H1 (cell line): ENCODE measurements at regions of chr4 and their contacts with region 1.

Region 1: DNA sequence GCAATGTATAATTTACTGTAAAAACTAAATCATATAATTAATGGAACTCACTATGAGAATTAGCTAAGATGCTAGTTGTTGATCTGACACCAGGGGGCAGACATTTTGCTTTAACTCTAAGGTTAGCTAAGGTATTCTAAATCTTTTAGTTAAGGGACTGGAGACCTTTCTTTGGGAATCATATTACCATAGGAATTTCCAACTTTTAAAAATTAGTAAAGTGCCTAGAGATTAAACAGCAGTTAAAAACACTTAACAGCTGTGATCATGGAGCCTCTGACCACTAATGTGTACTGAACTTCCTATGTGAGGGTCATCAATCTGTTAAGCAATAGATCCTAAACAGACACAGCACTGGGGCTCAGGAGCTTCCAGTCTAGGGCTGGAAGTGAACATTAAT is 226.6 kb downstream of the NSUN7 start:
- DNase-seq: no peak
- H3K4me3 ChIP-seq: no peak overlapping the region
- H3K27ac ChIP-seq: no peak overlapping the region
- H3K4me1 ChIP-seq: no peaks in the 10 kb centered on the region
- H3K27me3 ChIP-seq: no peaks in the 10 kb centered on the region
- CTCF ChIP-seq: peak in 2 of 3 experiments; percentile 16 to 59; a peak in 2 of 4 replicates
- EP300 ChIP-seq: no peak
- POLR2A ChIP-seq: no peak
- RAD21 ChIP-seq: peak; percentile 43 to 59

Region 2: GRCh38 chr4:40840985-40841571 is 135.3 kb before region 1 on chr4:
- CTCF ChIA-PET with region 1: no interaction called
- POLR2A ChIA-PET with region 1: no interaction called
- DNase-seq: peak; percentile 89 to 97
- H3K4me3 ChIP-seq: no peak overlapping the region
- H3K27ac ChIP-seq: no peak overlapping the region
- H3K4me1 ChIP-seq: peaks cover 0 to 6% (median 0%) of the 10 kb centered on the region in 4 experiments; a peak in 1 of 7 replicates
- H3K27me3 ChIP-seq: no peaks in the 10 kb centered on the region
- CTCF ChIP-seq: peak; percentile 88 to 99 (median 98)
- EP300 ChIP-seq: peak in 1 of 2 experiments; percentile 28; a peak in 1 of 3 replicates
- POLR2A ChIP-seq: no peak
- RAD21 ChIP-seq: peak; percentile 70 to 77

Region 3: DNA sequence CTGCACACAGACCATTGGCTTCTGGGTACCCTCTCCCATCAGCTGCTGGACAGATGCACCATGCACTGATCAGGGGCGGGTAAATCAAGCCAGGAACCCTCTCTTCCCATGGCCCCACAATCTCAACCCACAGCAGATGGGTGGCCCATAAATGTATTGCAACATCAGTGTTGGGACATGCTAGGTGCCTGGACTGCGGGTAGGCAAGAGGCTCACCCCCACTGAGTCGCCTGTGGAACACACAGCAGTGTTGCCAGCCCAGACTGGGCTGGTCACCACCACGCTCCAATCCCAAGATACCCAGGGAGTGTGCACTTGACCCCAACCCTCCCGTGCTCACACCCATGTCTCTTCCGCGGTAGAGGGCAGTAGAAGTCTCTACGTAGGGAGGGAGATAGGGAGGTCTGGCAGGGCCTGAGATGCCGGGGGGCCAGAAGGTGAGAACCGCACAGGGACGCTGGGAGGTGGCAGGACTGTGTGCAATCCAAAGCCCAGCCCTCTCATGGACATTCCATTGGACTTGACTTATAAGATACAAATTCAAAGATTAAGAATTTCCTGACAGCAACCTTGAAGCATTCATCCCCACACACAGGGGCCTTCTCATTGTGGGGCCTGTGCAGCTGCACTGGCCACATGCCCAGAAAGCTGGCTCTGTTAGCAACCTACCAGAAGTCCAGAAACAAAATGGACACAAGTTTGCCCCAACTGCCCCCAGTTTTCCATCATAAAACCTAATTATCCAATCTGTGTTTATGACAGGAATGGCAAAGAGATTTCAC is 42.9 kb before region 1 on chr4:
- CTCF ChIA-PET with region 1: interaction called, 53 read pairs
- POLR2A ChIA-PET with region 1: no interaction called
- DNase-seq: no peak
- H3K4me3 ChIP-seq: no peak overlapping the region
- H3K27ac ChIP-seq: no peak overlapping the region
- H3K4me1 ChIP-seq: peaks cover 5 to 16% (median 13%) of the 10 kb centered on the region in 4 experiments; a peak in 5 of 7 replicates
- H3K27me3 ChIP-seq: no peaks in the 10 kb centered on the region
- CTCF ChIP-seq: no peak
- EP300 ChIP-seq: no peak
- POLR2A ChIP-seq: no peak
- RAD21 ChIP-seq: no peak

Region 4: GRCh38 chr4:40992472-40993295 is 16.3 kb after region 1 on chr4:
- CTCF ChIA-PET with region 1: interaction called, 58 read pairs
- POLR2A ChIA-PET with region 1: interaction called, 3 read pairs
- DNase-seq: no peak
- H3K4me3 ChIP-seq: no peak overlapping the region
- H3K27ac ChIP-seq: no peak overlapping the region
- H3K4me1 ChIP-seq: no peaks in the 10 kb centered on the region; a peak in 1 of 7 replicates
- H3K27me3 ChIP-seq: no peaks in the 10 kb centered on the region
- CTCF ChIP-seq: no peak
- EP300 ChIP-seq: no peak
- POLR2A ChIP-seq: no peak
- RAD21 ChIP-seq: no peak

Region 5: DNA sequence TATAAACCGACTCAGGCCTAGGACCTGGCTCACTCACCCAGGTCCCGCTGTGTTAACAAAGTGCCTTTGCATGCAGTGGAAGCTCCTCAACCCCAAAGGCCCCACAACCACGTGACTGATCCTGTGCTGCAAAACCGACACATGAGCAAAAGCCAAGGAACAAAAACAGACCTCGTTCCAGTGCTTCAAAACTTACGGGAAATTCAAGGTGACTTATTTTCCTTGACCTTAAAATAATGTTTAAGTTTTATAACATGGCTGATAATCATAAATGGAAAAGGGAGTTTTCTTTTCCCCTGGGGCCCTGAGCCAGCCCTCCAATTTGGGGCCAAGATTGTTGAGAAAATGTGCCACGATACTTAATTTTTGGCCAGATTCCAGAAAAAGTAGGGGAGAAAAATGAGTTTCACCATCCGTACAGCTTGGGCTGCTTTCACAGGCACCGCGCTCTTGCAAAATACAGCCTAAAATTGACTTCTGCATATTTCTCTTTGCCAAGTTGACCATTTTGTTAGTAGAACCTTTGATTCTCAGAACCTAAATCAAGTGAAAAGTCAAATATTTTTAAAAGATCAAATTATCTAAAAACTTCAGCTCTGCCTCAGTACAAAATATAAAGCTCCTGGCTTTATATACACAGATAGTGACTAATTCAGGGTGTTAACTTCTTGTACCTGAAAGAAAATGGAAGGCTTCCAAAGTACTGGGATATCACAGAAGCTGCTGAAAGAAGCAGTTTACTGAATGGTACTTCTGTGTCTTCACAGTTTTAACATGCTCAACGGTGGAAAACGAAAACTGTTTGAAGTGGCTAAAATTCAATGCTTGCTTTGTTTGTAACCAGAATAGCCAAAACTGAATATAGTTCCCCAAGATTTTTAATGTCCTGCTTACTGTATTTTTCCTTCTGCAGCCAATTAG is 144.2 kb after region 1 on chr4:
- CTCF ChIA-PET with region 1: interaction called, 22 read pairs
- POLR2A ChIA-PET with region 1: no interaction called
- DNase-seq: no peak
- H3K4me3 ChIP-seq: no peak overlapping the region
- H3K27ac ChIP-seq: no peak overlapping the region
- H3K4me1 ChIP-seq: peaks cover 0 to 8% (median 3%) of the 10 kb centered on the region in 4 experiments; a peak in 3 of 7 replicates
- H3K27me3 ChIP-seq: no peaks in the 10 kb centered on the region
- CTCF ChIP-seq: no peak
- EP300 ChIP-seq: no peak
- POLR2A ChIP-seq: no peak
- RAD21 ChIP-seq: no peak

Region 6: GRCh38 chr4:41146716-41147506 is 170.6 kb after region 1 on chr4:
- CTCF ChIA-PET with region 1: no interaction called
- POLR2A ChIA-PET with region 1: no interaction called
- DNase-seq: no peak
- H3K4me3 ChIP-seq: no peak overlapping the region
- H3K27ac ChIP-seq: no peak overlapping the region
- H3K4me1 ChIP-seq: peaks cover 2 to 11% (median 7%) of the 10 kb centered on the region in 4 experiments; a peak in 4 of 7 replicates
- H3K27me3 ChIP-seq: no peaks in the 10 kb centered on the region
- CTCF ChIP-seq: no peak
- EP300 ChIP-seq: no peak
- POLR2A ChIP-seq: no peak
- RAD21 ChIP-seq: no peak

Region 7: DNA sequence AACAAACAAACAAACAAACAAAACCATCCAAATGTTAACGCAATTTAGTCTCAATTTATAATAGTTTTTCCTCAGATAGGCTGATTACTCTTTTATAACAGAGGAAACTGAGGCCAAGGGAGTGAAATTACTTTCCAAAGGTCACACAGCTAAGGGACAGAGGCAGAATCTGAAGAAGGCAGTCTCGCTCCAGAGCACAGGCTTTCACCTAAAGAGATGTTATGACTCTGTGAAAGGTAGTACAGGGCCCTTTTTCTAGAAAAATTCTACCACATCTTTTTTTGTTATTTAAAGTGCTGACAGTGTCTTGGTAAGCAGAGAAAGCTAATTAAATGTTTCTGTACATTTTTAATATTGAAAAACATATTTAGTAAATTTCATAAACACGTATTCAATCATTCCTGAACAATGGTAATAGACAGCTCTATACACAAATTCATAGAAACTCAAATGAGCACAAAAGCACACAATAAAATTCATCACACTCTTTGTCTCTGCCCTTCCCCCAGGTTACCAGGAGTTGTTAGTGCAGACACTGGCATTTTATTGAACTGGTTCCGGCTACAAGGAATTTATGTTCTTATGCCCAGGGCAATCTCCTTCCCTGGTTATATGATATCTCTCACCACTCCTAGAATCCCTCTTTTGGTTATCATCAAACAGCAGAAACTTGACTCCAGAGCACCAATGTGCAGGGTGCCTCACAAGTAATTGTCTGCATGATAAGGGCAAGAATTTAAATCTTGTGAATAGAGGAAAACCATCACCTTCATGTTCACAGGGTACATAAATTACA is 245.7 kb after region 1 on chr4:
- CTCF ChIA-PET with region 1: interaction called, 167 read pairs
- POLR2A ChIA-PET with region 1: interaction called, 5 read pairs
- DNase-seq: peak in 1 of 2 experiments; percentile 2
- H3K4me3 ChIP-seq: no peak overlapping the region
- H3K27ac ChIP-seq: no peak overlapping the region
- H3K4me1 ChIP-seq: peaks cover 0 to 3% (median 1%) of the 10 kb centered on the region in 4 experiments; a peak in 4 of 7 replicates
- H3K27me3 ChIP-seq: no peaks in the 10 kb centered on the region
- CTCF ChIP-seq: no peak
- EP300 ChIP-seq: no peak
- POLR2A ChIP-seq: no peak
- RAD21 ChIP-seq: no peak